RWPE1 (cell line): ENCODE measurements at regions of chr12 and their contacts with region 1.

Region 1: GRCh38 chr12:8544295-8544694 is 3.6 kb upstream of the CLEC4E start:
- DNase-seq: peak; percentile 59
- H3K27ac ChIP-seq: no peak overlapping the region
- CTCF ChIP-seq: peak; percentile 75

Region 2: DNA sequence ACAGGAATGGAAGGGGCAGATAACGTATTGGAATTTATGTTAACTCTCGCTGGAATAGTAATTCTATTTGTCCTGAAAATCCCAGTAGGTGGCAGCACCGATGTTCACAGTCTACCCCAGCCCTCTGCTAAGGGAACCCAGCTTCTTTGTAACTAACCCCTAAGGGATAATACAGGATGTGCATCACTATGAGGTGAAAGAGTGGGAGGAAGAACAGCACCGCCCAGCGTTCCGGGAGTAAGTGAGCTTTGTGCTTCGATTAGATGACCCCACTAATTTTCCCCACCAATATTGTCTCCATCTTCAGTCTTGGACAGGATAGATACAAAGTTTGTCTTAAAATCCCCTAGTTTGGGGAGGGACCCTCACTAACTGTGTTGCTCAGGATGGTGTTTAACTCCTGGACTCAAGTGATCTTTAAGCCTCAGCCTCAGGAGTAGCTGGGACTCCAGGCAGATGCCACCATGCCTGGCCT is 611.0 kb before region 1 on chr12:
- CTCF ChIA-PET with region 1: no interaction called
- POLR2A ChIA-PET with region 1: no interaction called
- DNase-seq: peak; percentile 87
- H3K27ac ChIP-seq: no peak overlapping the region
- CTCF ChIP-seq: peak; percentile 32

Region 3: DNA sequence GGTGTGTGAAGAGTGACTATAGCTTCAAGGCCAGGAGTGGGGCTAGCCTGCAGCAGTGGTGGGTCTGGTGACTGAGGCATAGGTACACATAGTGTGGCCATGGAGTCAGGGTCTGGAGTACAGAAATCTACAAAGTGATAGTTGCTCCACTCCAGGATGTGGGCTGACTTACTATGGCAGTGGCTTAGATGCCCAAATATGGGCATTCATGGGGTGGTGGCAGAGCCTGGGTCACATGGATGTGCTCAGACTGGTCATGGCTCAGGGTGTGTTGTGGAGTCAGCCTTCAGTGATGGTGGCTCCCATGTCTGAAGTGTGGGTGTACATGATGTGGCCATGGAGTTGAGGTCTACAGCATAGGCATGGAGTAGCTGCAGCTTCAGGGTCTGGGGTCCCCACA is 61.2 kb before region 1 on chr12:
- CTCF ChIA-PET with region 1: no interaction called
- POLR2A ChIA-PET with region 1: no interaction called
- DNase-seq: no peak
- H3K27ac ChIP-seq: no peak overlapping the region
- CTCF ChIP-seq: no peak

Region 4: GRCh38 chr12:8572507-8572906 is 28.2 kb after region 1 on chr12:
- CTCF ChIA-PET with region 1: interaction called, 13 read pairs
- POLR2A ChIA-PET with region 1: no interaction called
- DNase-seq: no peak
- H3K27ac ChIP-seq: no peak overlapping the region
- CTCF ChIP-seq: no peak

Region 5: DNA sequence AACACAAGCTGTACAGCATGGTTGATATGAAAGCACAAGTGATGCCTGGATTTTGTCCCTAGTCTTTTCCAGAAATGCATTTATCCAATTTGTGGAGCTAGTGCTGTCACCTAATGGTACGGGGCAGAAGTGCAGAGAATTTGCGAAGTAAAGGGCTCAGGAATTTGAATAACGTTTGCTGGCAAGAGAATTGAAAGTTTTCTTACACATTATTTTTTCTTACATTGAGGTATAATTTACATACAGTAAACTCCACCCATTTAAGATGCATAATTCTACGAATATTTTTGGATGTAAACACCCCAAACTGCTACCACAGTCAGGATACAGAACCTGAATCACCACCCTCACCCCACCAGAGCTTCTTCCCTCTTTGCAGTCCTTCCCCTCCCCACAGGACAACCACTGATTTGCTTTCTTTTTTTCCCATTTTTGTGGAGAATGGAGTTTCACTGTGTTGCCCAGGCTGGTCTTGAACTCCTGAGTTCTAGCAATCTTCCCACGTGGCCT is 64.8 kb after region 1 on chr12:
- CTCF ChIA-PET with region 1: interaction called, 28 read pairs
- POLR2A ChIA-PET with region 1: no interaction called
- DNase-seq: peak; percentile 54
- H3K27ac ChIP-seq: no peak overlapping the region
- CTCF ChIP-seq: peak; percentile 67

Region 6: GRCh38 chr12:9049520-9050133 is 505.3 kb after region 1 on chr12:
- CTCF ChIA-PET with region 1: interaction called, 15 read pairs
- POLR2A ChIA-PET with region 1: no interaction called
- DNase-seq: peak; percentile 29
- H3K27ac ChIP-seq: no peak overlapping the region
- CTCF ChIP-seq: peak; percentile 37; the same call in 1 of the 2 replicates